ENCODE measurements at regions of chr15 and their contacts with region 1.

Region 1: GRCh38 chr15:76150971-76151598 is 91.3 kb downstream of the TMEM266 start:
- DNase-seq: peak; percentile 77
- H3K4me3 ChIP-seq: no peak overlapping the region
- H3K27ac ChIP-seq: no peak overlapping the region
- H3K4me1 ChIP-seq: peaks cover 4% of the 10 kb centered on the region
- H3K27me3 ChIP-seq: peaks cover 7% of the 10 kb centered on the region in 2 experiments
- CTCF ChIP-seq: peak; percentile 77 to 94
- POLR2A ChIP-seq: no peak

Region 2: GRCh38 chr15:76057332-76058000 is 93.6 kb before region 1 on chr15:
- CTCF ChIA-PET with region 1: interaction called, 49 read pairs
- POLR2A ChIA-PET with region 1: no interaction called
- dilution Hi-C with region 1: no loop called
- intact Hi-C with region 1: loop called (anchors 1 kb)
- DNase-seq: peak; percentile 49
- H3K4me3 ChIP-seq: no peak overlapping the region
- H3K27ac ChIP-seq: no peak overlapping the region
- H3K4me1 ChIP-seq: peaks cover 8% of the 10 kb centered on the region
- H3K27me3 ChIP-seq: peaks cover 35 to 58% of the 10 kb centered on the region in 2 experiments
- CTCF ChIP-seq: peak; percentile 51 to 67
- POLR2A ChIP-seq: no peak

Region 3: GRCh38 chr15:76163475-76163881 is 12.4 kb after region 1 on chr15:
- CTCF ChIA-PET with region 1: interaction called, 12 read pairs
- POLR2A ChIA-PET with region 1: no interaction called
- dilution Hi-C with region 1: no loop called
- intact Hi-C with region 1: no loop called
- DNase-seq: no peak
- H3K4me3 ChIP-seq: no peak overlapping the region
- H3K27ac ChIP-seq: no peak overlapping the region
- H3K4me1 ChIP-seq: no peaks in the 10 kb centered on the region
- H3K27me3 ChIP-seq: peaks cover 0 to 1% of the 10 kb centered on the region in 2 experiments
- CTCF ChIP-seq: no peak
- POLR2A ChIP-seq: no peak

Region 4: GRCh38 chr15:76169013-76169412 is 17.9 kb after region 1 on chr15:
- CTCF ChIA-PET with region 1: interaction called, 12 read pairs
- POLR2A ChIA-PET with region 1: no interaction called
- dilution Hi-C with region 1: no loop called
- intact Hi-C with region 1: no loop called
- DNase-seq: no peak
- H3K4me3 ChIP-seq: no peak overlapping the region
- H3K27ac ChIP-seq: no peak overlapping the region
- H3K4me1 ChIP-seq: no peaks in the 10 kb centered on the region
- H3K27me3 ChIP-seq: no peaks in the 10 kb centered on the region
- CTCF ChIP-seq: no peak
- POLR2A ChIP-seq: no peak

Region 5: DNA sequence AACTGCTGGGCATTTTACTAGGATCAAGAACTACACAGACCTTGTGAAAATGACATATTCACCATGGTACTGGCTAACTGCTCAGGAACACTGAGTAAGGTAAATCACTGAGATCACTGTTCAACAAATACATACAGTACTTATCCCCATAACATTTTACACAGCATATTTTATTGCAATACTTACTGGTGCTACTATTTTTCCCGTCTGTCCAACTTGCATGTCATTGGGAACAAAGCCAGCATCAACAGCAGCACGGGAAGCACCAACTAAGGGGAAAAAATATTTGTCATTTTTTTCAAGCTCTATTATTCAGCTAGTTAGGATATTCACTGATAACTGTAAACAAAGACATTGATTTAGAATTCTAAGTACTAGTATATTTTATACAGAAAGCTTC is 123.1 kb after region 1 on chr15:
- CTCF ChIA-PET with region 1: no interaction called
- POLR2A ChIA-PET with region 1: no interaction called
- dilution Hi-C with region 1: no loop called
- intact Hi-C with region 1: no loop called
- DNase-seq: peak; percentile 79
- H3K4me3 ChIP-seq: no peak overlapping the region
- H3K27ac ChIP-seq: peak overlapping the region; percentile 11
- H3K4me1 ChIP-seq: peaks cover 5% of the 10 kb centered on the region
- H3K27me3 ChIP-seq: no peaks in the 10 kb centered on the region
- CTCF ChIP-seq: no peak
- POLR2A ChIP-seq: no peak

Region 6: GRCh38 chr15:76299786-76300185 is 148.7 kb after region 1 on chr15:
- CTCF ChIA-PET with region 1: no interaction called
- POLR2A ChIA-PET with region 1: no interaction called
- dilution Hi-C with region 1: no loop called
- intact Hi-C with region 1: no loop called
- DNase-seq: no peak
- H3K4me3 ChIP-seq: no peak overlapping the region
- H3K27ac ChIP-seq: no peak overlapping the region
- H3K4me1 ChIP-seq: no peaks in the 10 kb centered on the region
- H3K27me3 ChIP-seq: no peaks in the 10 kb centered on the region
- CTCF ChIP-seq: no peak
- POLR2A ChIP-seq: no peak

Region 7: DNA sequence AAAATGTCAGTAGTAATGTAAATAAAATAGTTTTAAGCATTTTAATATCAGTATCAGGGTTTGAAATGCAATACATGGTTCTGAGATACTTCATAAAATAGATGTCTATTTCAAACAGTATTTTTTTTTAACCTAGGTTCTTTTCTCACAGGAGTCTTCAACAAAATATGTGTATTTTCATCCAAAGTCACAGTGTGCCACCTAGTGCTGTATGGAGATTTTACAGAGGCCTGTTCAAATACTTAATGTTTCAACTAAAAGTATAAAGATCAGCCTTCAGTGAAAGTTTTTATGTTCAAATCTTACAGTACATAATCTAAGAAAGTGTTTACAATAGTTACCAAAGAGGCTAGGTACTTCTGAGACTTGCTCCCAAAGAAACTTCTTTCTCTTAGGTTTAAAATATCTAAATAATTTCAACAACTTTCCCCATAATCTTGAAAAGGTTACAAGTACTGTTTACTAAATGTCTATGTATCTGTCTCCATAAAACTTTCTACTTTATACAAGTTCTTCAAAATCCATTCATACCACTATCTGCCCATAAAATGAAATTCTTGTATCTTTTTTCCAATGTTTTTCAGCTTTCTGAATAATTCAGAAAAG is 715.7 kb after region 1 on chr15:
- CTCF ChIA-PET with region 1: interaction called, 7 read pairs
- POLR2A ChIA-PET with region 1: no interaction called
- dilution Hi-C with region 1: no loop called
- intact Hi-C with region 1: loop called (anchors 1 kb)
- DNase-seq: peak; percentile 64
- H3K4me3 ChIP-seq: no peak overlapping the region
- H3K27ac ChIP-seq: no peak overlapping the region
- H3K4me1 ChIP-seq: no peaks in the 10 kb centered on the region
- H3K27me3 ChIP-seq: no peaks in the 10 kb centered on the region
- CTCF ChIP-seq: peak; percentile 15 to 33
- POLR2A ChIP-seq: no peak

Measured in endothelial cell of umbilical vein (primary cell).